Calu3 (cell line): ENCODE measurements at regions of chr6 and their contacts with region 1.

Region 1: GRCh38 chr6:56652994-56653393 is 10.3 kb upstream of the DST start:
- DNase-seq: no peak
- H3K4me3 Mint-ChIP-seq: peak overlapping the region; percentile 18
- H3K27ac Mint-ChIP-seq: peak overlapping the region; percentile 80
- H3K4me1 Mint-ChIP-seq: peaks cover 74% of the 10 kb centered on the region
- H3K27me3 Mint-ChIP-seq: no peaks in the 10 kb centered on the region
- CTCF ChIP-seq: no peak

Region 2: GRCh38 chr6:56692523-56693245 is 39.7 kb after region 1 on chr6:
- CTCF ChIA-PET with region 1: interaction called, 7 read pairs
- intact Hi-C with region 1: loop called (anchors 1 kb)
- DNase-seq: no peak
- H3K4me3 Mint-ChIP-seq: peak overlapping the region; percentile 71
- H3K27ac Mint-ChIP-seq: peak overlapping the region; percentile 84
- H3K4me1 Mint-ChIP-seq: peaks cover 60% of the 10 kb centered on the region
- H3K27me3 Mint-ChIP-seq: no peaks in the 10 kb centered on the region
- CTCF ChIP-seq: no peak

Region 3: DNA sequence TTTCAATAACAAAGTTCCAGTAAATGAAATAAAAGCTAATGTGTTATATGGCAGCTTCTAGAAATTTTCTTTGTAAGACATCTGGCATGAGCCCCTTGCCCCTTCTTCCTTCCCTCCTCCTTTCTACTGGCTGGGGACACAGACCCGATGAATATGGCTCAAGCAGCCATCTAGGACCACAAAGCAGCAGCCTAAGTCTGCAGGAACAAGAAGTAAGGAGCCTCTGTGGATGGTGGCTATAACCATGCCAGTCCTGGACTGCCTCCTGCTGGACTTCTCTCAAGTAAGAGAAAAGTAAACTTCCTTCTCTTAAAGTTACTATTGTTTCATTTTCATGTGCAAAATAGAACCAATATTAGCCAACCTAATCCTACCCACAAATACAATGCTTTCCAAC is 104.6 kb after region 1 on chr6:
- CTCF ChIA-PET with region 1: no interaction called
- intact Hi-C with region 1: loop called (anchors 5 kb)
- DNase-seq: peak; percentile 54
- H3K4me3 Mint-ChIP-seq: no peak overlapping the region
- H3K27ac Mint-ChIP-seq: no peak overlapping the region
- H3K4me1 Mint-ChIP-seq: peaks cover 57% of the 10 kb centered on the region
- H3K27me3 Mint-ChIP-seq: no peaks in the 10 kb centered on the region
- CTCF ChIP-seq: peak; percentile 60

Region 4: GRCh38 chr6:57283911-57284455 is 631.0 kb after region 1 on chr6:
- CTCF ChIA-PET with region 1: no interaction called
- intact Hi-C with region 1: no loop called
- DNase-seq: no peak
- H3K4me3 Mint-ChIP-seq: no peak overlapping the region
- H3K27ac Mint-ChIP-seq: no peak overlapping the region
- H3K4me1 Mint-ChIP-seq: no peaks in the 10 kb centered on the region
- H3K27me3 Mint-ChIP-seq: peaks cover 6% of the 10 kb centered on the region
- CTCF ChIP-seq: no peak